ENCODE measurements at regions of chr2 and their contacts with region 1.

Region 1: DNA sequence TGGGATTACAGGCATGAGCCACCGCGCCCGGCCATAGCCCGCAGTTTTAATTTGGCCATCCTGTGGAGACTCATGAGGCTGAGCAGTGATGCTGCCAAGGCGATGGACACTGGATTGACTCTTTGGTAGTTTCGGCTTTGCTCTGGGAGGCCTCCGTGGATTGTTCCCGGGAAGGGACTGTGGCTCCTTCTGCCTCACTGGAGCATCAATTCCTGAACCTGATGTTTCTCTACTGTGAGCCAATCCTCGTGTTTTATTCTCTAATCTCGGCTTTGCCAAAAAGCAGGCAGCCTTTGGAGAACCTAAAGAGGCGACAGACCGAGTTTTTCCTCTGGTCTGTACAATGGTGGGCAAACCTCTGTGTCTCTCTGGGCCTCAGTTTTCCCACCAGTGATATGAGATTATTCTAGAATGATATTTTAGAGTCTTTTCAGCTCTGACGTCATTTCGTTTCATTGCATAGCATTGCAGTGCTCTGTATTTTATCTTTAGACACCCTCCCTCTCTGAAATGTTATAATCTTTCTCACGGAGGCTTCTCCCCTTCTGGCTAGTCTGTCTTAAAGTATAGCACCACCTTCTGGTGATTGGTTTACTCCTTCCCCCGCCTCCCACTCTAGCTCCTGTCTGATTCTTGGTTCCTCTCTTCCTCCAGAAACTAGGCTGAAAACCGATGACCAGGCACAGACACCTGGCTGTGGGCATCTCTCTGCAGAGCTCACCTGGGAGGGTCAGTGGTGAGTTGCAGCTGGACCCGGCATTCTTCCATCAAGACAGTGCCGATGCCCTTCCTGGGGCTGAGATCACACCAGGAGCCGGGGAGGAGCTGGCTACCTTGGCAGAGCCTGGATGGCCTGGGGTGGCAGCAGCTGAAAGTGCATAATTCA is 341.3 kb downstream of the MYCN start:
- DNase-seq: peak in 1 of 2 experiments; percentile 54
- H3K4me3 ChIP-seq: no peak overlapping the region
- H3K4me3 Mint-ChIP-seq: no peak overlapping the region
- H3K27ac Mint-ChIP-seq: peak overlapping the region; percentile 42
- H3K4me1 ChIP-seq: peaks cover 4% of the 10 kb centered on the region
- H3K4me1 Mint-ChIP-seq: peaks cover 21% of the 10 kb centered on the region
- H3K27me3 ChIP-seq: no peaks in the 10 kb centered on the region
- H3K27me3 Mint-ChIP-seq: no peaks in the 10 kb centered on the region
- CTCF ChIP-seq: peak; percentile 23 to 52

Region 2: GRCh38 chr2:15733856-15734673 is 547.6 kb before region 1 on chr2:
- CTCF ChIA-PET with region 1: no interaction called
- POLR2A ChIA-PET with region 1: no interaction called
- intact Hi-C with region 1: no loop called
- DNase-seq: peak; percentile 69 to 75
- H3K4me3 ChIP-seq: no peak overlapping the region
- H3K4me3 Mint-ChIP-seq: peak overlapping the region; percentile 5
- H3K27ac Mint-ChIP-seq: peak overlapping the region; percentile 46
- H3K4me1 ChIP-seq: peaks cover 45% of the 10 kb centered on the region
- H3K4me1 Mint-ChIP-seq: peaks cover 46% of the 10 kb centered on the region
- H3K27me3 ChIP-seq: no peaks in the 10 kb centered on the region
- H3K27me3 Mint-ChIP-seq: no peaks in the 10 kb centered on the region
- CTCF ChIP-seq: no peak

Region 3: GRCh38 chr2:16114836-16115235 is 166.9 kb before region 1 on chr2:
- CTCF ChIA-PET with region 1: no interaction called
- POLR2A ChIA-PET with region 1: interaction called, 10 read pairs
- intact Hi-C with region 1: no loop called
- DNase-seq: peak; percentile 83 to 88
- H3K4me3 ChIP-seq: no peak overlapping the region
- H3K4me3 Mint-ChIP-seq: no peak overlapping the region
- H3K27ac Mint-ChIP-seq: no peak overlapping the region
- H3K4me1 ChIP-seq: peaks cover 36% of the 10 kb centered on the region
- H3K4me1 Mint-ChIP-seq: peaks cover 12% of the 10 kb centered on the region
- H3K27me3 ChIP-seq: no peaks in the 10 kb centered on the region
- H3K27me3 Mint-ChIP-seq: no peaks in the 10 kb centered on the region
- CTCF ChIP-seq: no peak

Region 4: GRCh38 chr2:16155766-16156165 is 125.9 kb before region 1 on chr2:
- CTCF ChIA-PET with region 1: no interaction called
- POLR2A ChIA-PET with region 1: no interaction called
- intact Hi-C with region 1: no loop called
- DNase-seq: no peak
- H3K4me3 ChIP-seq: no peak overlapping the region
- H3K4me3 Mint-ChIP-seq: no peak overlapping the region
- H3K27ac Mint-ChIP-seq: no peak overlapping the region
- H3K4me1 ChIP-seq: no peaks in the 10 kb centered on the region
- H3K4me1 Mint-ChIP-seq: no peaks in the 10 kb centered on the region
- H3K27me3 ChIP-seq: no peaks in the 10 kb centered on the region
- H3K27me3 Mint-ChIP-seq: no peaks in the 10 kb centered on the region
- CTCF ChIP-seq: no peak

Region 5: DNA sequence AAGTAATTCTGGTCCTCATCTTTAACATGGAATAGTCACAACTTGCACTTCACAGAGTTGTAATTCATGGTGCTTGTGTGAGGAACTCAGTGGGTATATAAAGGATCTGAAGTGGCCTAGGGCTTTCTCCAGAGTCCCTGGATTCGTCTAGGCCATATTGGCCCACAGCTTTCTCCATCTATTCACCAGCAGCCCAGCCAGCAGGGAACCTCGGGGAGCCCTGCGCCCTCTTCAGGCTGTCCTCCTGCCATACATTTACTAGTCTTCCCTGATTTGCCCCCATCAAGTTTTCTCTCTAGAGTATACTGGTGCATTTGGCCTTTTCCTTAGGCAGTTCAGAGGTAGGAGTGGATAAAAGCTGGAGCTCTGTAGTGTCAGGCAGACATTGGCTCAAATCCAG is 63.1 kb before region 1 on chr2:
- CTCF ChIA-PET with region 1: no interaction called
- POLR2A ChIA-PET with region 1: no interaction called
- intact Hi-C with region 1: loop called (anchors 2 kb)
- DNase-seq: peak; percentile 54 to 55
- H3K4me3 ChIP-seq: no peak overlapping the region
- H3K4me3 Mint-ChIP-seq: no peak overlapping the region
- H3K27ac Mint-ChIP-seq: no peak overlapping the region
- H3K4me1 ChIP-seq: peaks cover 4% of the 10 kb centered on the region; the same call in 1 of the 2 replicates
- H3K4me1 Mint-ChIP-seq: no peaks in the 10 kb centered on the region
- H3K27me3 ChIP-seq: no peaks in the 10 kb centered on the region
- H3K27me3 Mint-ChIP-seq: no peaks in the 10 kb centered on the region
- CTCF ChIP-seq: peak; percentile 37 to 53

Region 6: DNA sequence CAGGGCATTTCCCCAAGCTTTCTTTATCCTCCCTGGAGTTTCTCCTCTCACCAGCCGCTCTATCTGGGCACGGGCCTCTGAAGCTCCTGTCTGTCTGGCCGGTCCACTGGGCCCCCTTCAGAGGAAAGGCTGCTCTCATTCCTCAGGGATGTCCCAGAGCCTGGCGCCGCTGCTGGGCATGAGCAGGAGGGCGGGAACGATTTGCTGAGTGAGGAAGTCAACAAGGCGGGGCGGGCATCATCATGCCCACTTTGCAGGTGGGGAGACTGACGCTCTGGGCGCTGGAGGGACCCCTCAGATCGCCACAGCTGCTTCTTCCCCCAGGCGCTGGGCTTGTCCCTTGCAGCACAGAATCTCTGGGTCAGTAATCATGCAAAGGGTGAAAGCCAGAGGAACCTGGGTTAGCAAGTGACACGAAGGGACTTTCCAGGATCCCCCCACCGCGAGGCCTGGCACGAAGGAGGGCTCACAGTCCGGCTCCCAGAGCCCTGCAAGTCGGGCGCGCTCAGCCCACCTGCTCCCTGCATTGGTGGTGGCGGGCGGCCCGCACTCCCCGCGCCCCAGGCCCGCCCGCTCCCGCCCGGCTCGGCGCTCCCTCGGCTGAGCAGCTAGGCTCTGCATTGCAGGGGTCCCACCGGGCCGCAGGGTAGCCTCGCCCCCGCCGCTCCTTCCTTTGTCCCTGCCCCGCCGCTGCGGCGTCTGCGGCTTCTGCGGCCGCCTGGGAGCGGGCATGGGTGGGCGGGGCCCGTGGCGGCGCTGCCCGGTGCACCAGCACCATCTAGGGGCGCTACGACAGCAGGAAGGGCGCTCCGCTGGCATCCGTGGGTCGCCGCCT is 226.2 kb after region 1 on chr2:
- CTCF ChIA-PET with region 1: no interaction called
- POLR2A ChIA-PET with region 1: no interaction called
- intact Hi-C with region 1: loop called (anchors 5 kb)
- DNase-seq: peak; percentile 66 to 82
- H3K4me3 ChIP-seq: peak overlapping the region; percentile 26
- H3K4me3 Mint-ChIP-seq: peak overlapping the region; percentile 61
- H3K27ac Mint-ChIP-seq: peak overlapping the region; percentile 37
- H3K4me1 ChIP-seq: peaks cover 36% of the 10 kb centered on the region
- H3K4me1 Mint-ChIP-seq: peaks cover 12% of the 10 kb centered on the region
- H3K27me3 ChIP-seq: no peaks in the 10 kb centered on the region
- H3K27me3 Mint-ChIP-seq: no peaks in the 10 kb centered on the region
- CTCF ChIP-seq: peak; percentile 83 to 91

Measured in Caco-2 (cell line).